HepG2 (cell line): ENCODE measurements at regions of chr19 and their contacts with region 1.

Region 1: DNA sequence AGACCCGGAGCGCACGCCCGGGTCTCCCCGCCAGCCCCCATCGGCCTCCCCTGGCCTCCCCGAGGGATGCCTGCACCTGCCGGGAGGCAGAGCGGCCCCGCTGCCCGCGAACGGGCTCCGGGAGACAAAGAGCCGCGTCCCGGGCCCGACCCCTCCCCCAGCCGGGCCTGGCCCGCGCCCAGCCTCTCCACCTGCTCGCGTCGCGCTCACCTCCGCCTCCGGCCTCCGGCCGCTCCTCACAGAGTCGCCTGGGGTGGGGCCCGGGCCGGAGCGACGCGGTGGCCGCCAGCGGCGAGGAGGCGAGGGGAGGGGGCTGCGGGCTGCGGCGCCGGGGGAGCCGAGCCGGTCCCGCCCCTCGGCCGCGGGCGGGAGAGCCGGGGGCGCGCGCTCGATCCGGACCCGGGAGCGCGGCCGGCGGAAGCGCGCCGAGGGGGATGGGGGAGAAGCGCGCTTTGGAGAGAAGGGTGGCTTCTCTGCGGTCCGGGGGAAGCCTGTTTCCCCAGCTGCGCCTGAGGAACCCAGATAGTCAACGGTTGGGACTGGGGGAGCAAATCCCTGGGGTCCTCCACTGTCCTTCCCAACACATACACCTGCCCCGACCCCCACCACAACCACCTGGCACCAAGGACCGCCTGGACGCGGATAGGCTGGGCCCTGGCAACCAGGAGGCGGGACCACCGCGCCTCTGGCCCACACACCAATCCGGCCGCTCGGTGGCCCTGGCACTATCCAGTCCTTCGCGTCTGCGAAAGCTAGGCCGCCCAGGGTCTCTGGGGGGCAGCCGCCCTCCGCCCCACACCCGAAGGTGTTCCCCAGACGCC is at the start of gene PRR36:
- DNase-seq: peak; percentile 58
- ATAC-seq: peak; percentile 12; the same call in 2 of the 3 replicates
- H3K4me3 ChIP-seq: peak within 1 kb of the TSS; percentile 56 to 73 (median 59)
- H3K27ac ChIP-seq: no peak within 1 kb of the TSS
- H3K4me1 ChIP-seq: peaks cover 50% of the 10 kb centered on the region
- H3K27me3 ChIP-seq: peaks cover 0 to 4% of the 10 kb centered on the region in 2 experiments; a peak in 1 of 5 replicates
- CTCF ChIP-seq: peak; percentile 62
- EP300 ChIP-seq: no peak
- POLR2A ChIP-seq: no peak
- RAD21 ChIP-seq: no peak
- total RNA-seq, gene PRR36: 0.07 TPM in 2 replicates

Region 2: GRCh38 chr19:7888145-7888825 is 14.0 kb after region 1 on chr19 and contains the start of gene LRRC8E:
- CTCF ChIA-PET with region 1: no interaction called
- POLR2A ChIA-PET with region 1: interaction called, 52 read pairs
- in situ Hi-C with region 1: no loop called
- intact Hi-C with region 1: no loop called
- DNase-seq: peak; percentile 59
- ATAC-seq: peak; percentile 94
- H3K4me3 ChIP-seq: peak within 1 kb of the TSS; percentile 82 to 93 (median 90)
- H3K27ac ChIP-seq: peak within 1 kb of the TSS; percentile 58
- H3K4me1 ChIP-seq: peaks cover 66% of the 10 kb centered on the region
- H3K27me3 ChIP-seq: no peaks in the 10 kb centered on the region
- CTCF ChIP-seq: no peak
- EP300 ChIP-seq: no peak
- POLR2A ChIP-seq: peak; percentile 71 to 85
- RAD21 ChIP-seq: no peak
- total RNA-seq, gene LRRC8E: 4.0 and 8.0 TPM in 2 replicates

Region 3: DNA sequence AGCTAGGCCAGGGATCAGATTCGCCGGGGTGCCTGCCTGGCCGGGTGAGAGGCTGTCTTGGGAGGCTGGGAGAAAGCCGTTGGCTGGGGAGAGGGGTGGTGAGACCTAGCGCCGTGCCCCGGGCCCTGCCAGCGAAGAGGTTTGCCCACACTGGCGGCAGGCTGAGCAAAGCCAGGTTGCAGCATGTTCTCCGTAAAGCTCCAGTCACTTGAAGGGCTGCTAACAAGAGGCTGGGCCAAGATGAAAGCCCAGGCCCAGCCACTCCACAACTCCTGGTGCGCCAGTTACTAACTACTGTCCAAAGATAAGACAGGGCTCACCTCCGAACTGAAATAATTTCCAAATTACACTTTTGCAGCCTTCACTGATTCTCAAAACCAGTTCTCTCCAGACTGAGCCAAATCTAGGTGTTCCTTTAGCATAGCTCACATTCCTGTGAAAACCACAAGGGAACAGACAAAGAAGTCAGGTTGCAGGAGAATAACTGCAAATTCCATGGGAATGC is 114.8 kb after region 1 on chr19:
- CTCF ChIA-PET with region 1: no interaction called
- POLR2A ChIA-PET with region 1: no interaction called
- in situ Hi-C with region 1: no loop called
- intact Hi-C with region 1: no loop called
- DNase-seq: no peak
- ATAC-seq: no peak
- H3K4me3 ChIP-seq: no peak overlapping the region
- H3K27ac ChIP-seq: no peak overlapping the region
- H3K4me1 ChIP-seq: peaks cover 10% of the 10 kb centered on the region
- H3K27me3 ChIP-seq: no peaks in the 10 kb centered on the region
- CTCF ChIP-seq: no peak
- EP300 ChIP-seq: no peak
- POLR2A ChIP-seq: no peak
- RAD21 ChIP-seq: no peak